Panc1 (cell line): ENCODE measurements at regions of chr5 and their contacts with region 1.

Region 1: DNA sequence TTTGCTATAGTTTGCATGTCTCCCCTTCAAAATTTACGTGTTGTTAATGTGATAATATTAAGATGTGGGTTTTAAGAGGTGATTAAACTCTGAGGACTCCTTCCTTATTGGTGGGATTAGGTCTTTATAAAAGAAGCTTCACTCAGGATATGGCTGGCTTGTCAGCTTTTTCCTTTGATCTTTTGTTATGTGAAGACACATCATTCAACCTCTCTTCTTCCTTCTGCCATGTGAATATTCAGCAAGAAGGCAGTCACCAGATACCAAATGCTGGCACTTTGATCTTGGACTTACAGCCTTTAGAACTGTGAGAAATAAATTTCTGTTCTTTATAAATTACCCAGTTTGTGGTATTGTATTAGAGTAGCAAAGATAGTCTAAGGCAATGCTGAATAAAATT is 855.9 kb upstream of the CDH10 start:
- DNase-seq: no peak
- ATAC-seq: no peak
- H3K4me3 ChIP-seq: no peak overlapping the region
- H3K27ac ChIP-seq: no peak overlapping the region
- H3K4me1 ChIP-seq: no peaks in the 10 kb centered on the region
- H3K27me3 ChIP-seq: no peaks in the 10 kb centered on the region
- CTCF ChIP-seq: no peak

Region 2: DNA sequence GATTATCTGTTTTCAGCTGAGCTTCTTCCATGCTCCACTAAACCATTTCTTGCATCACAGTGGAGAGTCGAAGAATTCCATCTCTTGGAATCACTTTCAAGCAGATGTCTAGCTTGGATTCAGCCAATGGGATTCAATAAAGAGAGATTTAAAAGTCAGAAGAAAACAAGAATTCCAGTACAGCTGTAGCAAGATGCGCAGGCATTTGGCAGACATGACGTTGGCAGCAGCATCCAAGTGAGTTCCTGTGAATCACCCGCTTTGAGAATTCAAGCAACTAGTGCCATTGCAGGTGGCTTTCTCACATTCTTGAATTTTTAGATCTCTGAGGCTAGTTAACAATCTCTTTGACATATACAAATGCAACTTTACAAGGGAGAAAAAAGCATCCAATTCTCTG is 1322.8 kb before region 1 on chr5:
- CTCF ChIA-PET with region 1: no interaction called
- POLR2A ChIA-PET with region 1: interaction called, 10 read pairs
- in situ Hi-C with region 1: no loop called
- intact Hi-C with region 1: no loop called
- DNase-seq: no peak
- ATAC-seq: no peak
- H3K4me3 ChIP-seq: no peak overlapping the region
- H3K27ac ChIP-seq: no peak overlapping the region
- H3K4me1 ChIP-seq: no peaks in the 10 kb centered on the region
- H3K27me3 ChIP-seq: no peaks in the 10 kb centered on the region
- CTCF ChIP-seq: no peak

Region 3: GRCh38 chr5:25458628-25459027 is 42.0 kb before region 1 on chr5:
- CTCF ChIA-PET with region 1: no interaction called
- POLR2A ChIA-PET with region 1: no interaction called
- in situ Hi-C with region 1: no loop called
- intact Hi-C with region 1: no loop called
- DNase-seq: no peak
- ATAC-seq: no peak
- H3K4me3 ChIP-seq: no peak overlapping the region
- H3K27ac ChIP-seq: no peak overlapping the region
- H3K4me1 ChIP-seq: no peaks in the 10 kb centered on the region
- H3K27me3 ChIP-seq: no peaks in the 10 kb centered on the region
- CTCF ChIP-seq: no peak